ENCODE measurements at regions of chr11 and their contacts with region 1.

Region 1: DNA sequence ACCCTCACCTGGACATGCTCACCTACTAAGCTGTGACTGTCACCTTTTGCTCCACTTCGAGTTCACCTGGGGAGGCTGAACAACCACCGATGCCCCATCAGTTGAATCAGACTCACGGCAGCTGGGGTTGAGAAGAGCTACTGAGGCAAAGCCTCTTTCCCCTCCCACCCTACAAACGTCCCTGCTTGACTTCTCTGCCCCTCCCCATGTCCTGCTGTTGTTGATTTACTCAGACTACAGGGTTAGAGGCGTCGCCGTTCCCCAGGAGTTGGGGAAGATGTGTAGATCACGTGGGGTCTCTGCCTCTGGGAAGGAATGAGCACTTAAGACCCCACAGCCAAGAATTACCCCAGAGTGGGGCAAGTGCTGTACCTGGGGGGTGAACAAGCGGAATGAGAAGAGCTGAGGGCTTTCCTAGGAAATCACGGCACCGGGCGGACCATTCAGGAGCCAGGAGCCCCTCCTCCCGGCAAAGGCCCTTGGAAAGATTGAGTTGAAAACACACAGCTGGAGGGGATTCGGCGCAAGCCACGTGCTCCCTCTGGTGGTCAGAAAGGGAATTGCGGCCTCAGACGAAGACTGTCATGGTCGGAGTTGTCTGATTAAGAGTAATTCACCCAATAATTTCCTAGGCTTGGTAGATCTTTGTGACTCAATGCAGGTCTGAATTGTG is 7.0 kb downstream of the FXYD2 start:
- DNase-seq: peak; percentile 73 to 90 (median 85)
- ATAC-seq: peak; percentile 24
- H3K4me3 ChIP-seq: no peak overlapping the region
- H3K4me3 Mint-ChIP-seq: no peak overlapping the region
- H3K27ac ChIP-seq: peak overlapping the region in 1 of 2 experiments; percentile 83
- H3K27ac Mint-ChIP-seq: peak overlapping the region; percentile 80
- H3K4me1 ChIP-seq: peaks cover 60% of the 10 kb centered on the region
- H3K4me1 Mint-ChIP-seq: peaks cover 59% of the 10 kb centered on the region
- H3K27me3 ChIP-seq: no peaks in the 10 kb centered on the region
- H3K27me3 Mint-ChIP-seq: no peaks in the 10 kb centered on the region
- CTCF ChIP-seq: peak; percentile 96

Region 2: GRCh38 chr11:117426269-117426685 is 391.2 kb before region 1 on chr11:
- CTCF ChIA-PET with region 1: interaction called, 27 read pairs
- POLR2A ChIA-PET with region 1: no interaction called
- intact Hi-C with region 1: loop called (anchors 1 to 5 kb)
- DNase-seq: peak; percentile 32 to 83 (median 65)
- ATAC-seq: peak; percentile 54
- H3K4me3 ChIP-seq: no peak overlapping the region
- H3K4me3 Mint-ChIP-seq: no peak overlapping the region
- H3K27ac ChIP-seq: no peak overlapping the region
- H3K27ac Mint-ChIP-seq: no peak overlapping the region
- H3K4me1 ChIP-seq: peaks cover 3% of the 10 kb centered on the region
- H3K4me1 Mint-ChIP-seq: no peaks in the 10 kb centered on the region
- H3K27me3 ChIP-seq: peaks cover 0 to 3% of the 10 kb centered on the region in 2 experiments
- H3K27me3 Mint-ChIP-seq: peaks cover 4% of the 10 kb centered on the region
- CTCF ChIP-seq: peak; percentile 97

Region 3: GRCh38 chr11:117796872-117797529 is 20.5 kb before region 1 on chr11 and contains the start of gene DSCAML1:
- CTCF ChIA-PET with region 1: interaction called, 431 read pairs
- POLR2A ChIA-PET with region 1: interaction called, 4 read pairs
- intact Hi-C with region 1: no loop called
- DNase-seq: peak in 5 of 9 experiments; percentile 11 to 59 (median 47)
- ATAC-seq: peak; percentile 86
- H3K4me3 ChIP-seq: peak within 1 kb of the TSS; percentile 28 to 39
- H3K4me3 Mint-ChIP-seq: peak within 1 kb of the TSS; percentile 73
- H3K27ac ChIP-seq: no peak within 1 kb of the TSS
- H3K27ac Mint-ChIP-seq: no peak within 1 kb of the TSS
- H3K4me1 ChIP-seq: peaks cover 20% of the 10 kb centered on the region
- H3K4me1 Mint-ChIP-seq: peaks cover 18% of the 10 kb centered on the region
- H3K27me3 ChIP-seq: peaks cover 26 to 43% of the 10 kb centered on the region in 2 experiments
- H3K27me3 Mint-ChIP-seq: peaks cover 40% of the 10 kb centered on the region
- CTCF ChIP-seq: no peak
- total RNA-seq, gene DSCAML1: 1.3 to 1.8 TPM

Region 4: DNA sequence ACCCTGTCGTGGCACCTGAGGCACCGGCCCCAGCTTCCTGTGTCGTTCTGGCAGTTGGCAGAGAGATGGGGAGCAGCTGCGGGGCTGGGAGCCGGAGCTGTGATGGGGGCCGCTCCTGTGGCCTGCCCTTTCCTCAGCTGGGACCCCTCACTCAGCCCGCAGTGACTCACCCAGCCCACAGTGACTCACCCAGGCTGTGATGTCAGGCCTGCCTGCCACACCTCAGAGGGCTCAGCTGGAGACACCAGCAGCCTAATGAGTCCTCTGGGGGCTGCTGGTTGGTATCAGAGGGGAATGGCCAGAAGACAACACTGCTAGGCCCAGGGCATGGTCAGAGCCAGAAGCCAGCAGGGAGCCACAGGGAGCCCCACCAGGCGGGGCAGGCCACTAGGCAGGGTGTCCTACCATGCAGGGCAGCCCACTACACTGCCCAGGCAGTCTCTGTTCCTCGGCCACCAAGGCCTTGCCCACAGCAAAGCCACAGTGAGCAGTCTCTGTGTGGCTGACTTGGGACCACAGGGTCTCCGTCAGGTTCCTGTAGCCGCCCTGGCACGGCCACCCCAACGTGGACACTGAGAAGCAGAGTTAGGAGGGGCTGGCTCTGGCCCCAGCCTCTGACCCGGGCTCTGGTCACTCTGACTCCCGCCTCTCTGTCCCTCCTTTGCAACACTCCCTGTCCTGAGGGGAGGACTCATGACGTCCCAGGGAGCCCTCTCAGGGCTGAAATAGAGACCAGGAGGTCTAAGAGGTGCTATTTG is 11.3 kb after region 1 on chr11:
- CTCF ChIA-PET with region 1: interaction called, 40 read pairs
- POLR2A ChIA-PET with region 1: interaction called, 5 read pairs
- intact Hi-C with region 1: loop called in 1 of 2 experiments (anchors 1 kb)
- DNase-seq: peak; percentile 58 to 94 (median 89)
- ATAC-seq: peak; percentile 87
- H3K4me3 ChIP-seq: no peak overlapping the region
- H3K4me3 Mint-ChIP-seq: peak overlapping the region; percentile 53
- H3K27ac ChIP-seq: peak overlapping the region in 1 of 2 experiments; percentile 69
- H3K27ac Mint-ChIP-seq: peak overlapping the region; percentile 91
- H3K4me1 ChIP-seq: peaks cover 52% of the 10 kb centered on the region
- H3K4me1 Mint-ChIP-seq: peaks cover 69% of the 10 kb centered on the region
- H3K27me3 ChIP-seq: no peaks in the 10 kb centered on the region
- H3K27me3 Mint-ChIP-seq: no peaks in the 10 kb centered on the region
- CTCF ChIP-seq: no peak

Region 5: DNA sequence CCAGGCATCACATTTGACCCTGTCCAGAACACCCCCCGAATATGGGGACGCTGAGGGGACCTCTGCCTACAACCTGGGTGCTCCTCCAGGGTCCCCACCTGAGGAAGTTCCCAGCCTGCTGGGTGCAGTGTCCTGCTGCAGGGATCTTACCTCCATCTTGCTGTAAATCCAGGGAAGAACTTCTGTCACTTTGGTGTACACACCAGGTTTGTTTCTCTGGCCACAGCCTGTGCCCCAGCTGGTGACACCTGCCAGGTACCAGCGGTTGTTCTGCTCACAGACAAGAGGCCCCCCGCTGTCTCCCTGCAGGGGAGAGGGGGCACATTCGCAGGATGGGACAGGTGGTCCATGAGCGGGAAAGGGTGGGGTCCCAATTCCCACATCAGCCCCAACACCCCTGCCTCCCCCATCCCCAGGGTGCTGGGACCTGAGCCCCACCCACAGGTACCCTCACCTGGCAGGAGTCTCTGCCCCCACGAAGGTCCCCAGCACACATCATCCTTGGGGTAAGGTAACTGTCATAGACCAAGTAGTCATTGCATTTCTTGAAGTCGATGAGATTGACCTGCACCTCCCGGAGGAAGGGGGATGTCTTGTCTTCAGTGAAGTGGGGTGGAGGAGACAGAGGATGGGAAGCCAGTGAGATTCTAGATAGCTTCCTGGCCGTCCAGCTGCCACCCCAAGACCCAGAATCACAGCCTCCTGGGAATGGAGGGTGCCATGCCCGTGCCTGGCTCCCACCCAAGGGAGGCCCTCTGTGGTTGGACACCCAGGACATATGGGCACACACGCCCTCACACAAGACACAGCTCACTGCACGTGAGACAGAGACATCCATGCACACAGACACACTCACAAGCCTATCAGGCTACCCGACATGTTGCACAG is 86.2 kb after region 1 on chr11:
- CTCF ChIA-PET with region 1: interaction called, 5 read pairs
- POLR2A ChIA-PET with region 1: no interaction called
- intact Hi-C with region 1: loop called in 1 of 2 experiments (anchors 2 kb)
- DNase-seq: no peak
- ATAC-seq: no peak
- H3K4me3 ChIP-seq: no peak overlapping the region
- H3K4me3 Mint-ChIP-seq: no peak overlapping the region
- H3K27ac ChIP-seq: no peak overlapping the region
- H3K27ac Mint-ChIP-seq: no peak overlapping the region
- H3K4me1 ChIP-seq: no peaks in the 10 kb centered on the region
- H3K4me1 Mint-ChIP-seq: peaks cover 13% of the 10 kb centered on the region
- H3K27me3 ChIP-seq: no peaks in the 10 kb centered on the region
- H3K27me3 Mint-ChIP-seq: no peaks in the 10 kb centered on the region
- CTCF ChIP-seq: no peak

Region 6: GRCh38 chr11:117932067-117932370 is 114.5 kb after region 1 on chr11:
- CTCF ChIA-PET with region 1: interaction called, 14 read pairs
- POLR2A ChIA-PET with region 1: interaction called, 5 read pairs
- intact Hi-C with region 1: no loop called
- DNase-seq: peak in 6 of 9 experiments; percentile 32 to 73 (median 56)
- ATAC-seq: no peak
- H3K4me3 ChIP-seq: no peak overlapping the region
- H3K4me3 Mint-ChIP-seq: no peak overlapping the region
- H3K27ac ChIP-seq: peak overlapping the region in 1 of 2 experiments; percentile 65
- H3K27ac Mint-ChIP-seq: peak overlapping the region; percentile 91
- H3K4me1 ChIP-seq: peaks cover 52% of the 10 kb centered on the region
- H3K4me1 Mint-ChIP-seq: peaks cover 56% of the 10 kb centered on the region
- H3K27me3 ChIP-seq: no peaks in the 10 kb centered on the region
- H3K27me3 Mint-ChIP-seq: no peaks in the 10 kb centered on the region
- CTCF ChIP-seq: no peak

Region 7: DNA sequence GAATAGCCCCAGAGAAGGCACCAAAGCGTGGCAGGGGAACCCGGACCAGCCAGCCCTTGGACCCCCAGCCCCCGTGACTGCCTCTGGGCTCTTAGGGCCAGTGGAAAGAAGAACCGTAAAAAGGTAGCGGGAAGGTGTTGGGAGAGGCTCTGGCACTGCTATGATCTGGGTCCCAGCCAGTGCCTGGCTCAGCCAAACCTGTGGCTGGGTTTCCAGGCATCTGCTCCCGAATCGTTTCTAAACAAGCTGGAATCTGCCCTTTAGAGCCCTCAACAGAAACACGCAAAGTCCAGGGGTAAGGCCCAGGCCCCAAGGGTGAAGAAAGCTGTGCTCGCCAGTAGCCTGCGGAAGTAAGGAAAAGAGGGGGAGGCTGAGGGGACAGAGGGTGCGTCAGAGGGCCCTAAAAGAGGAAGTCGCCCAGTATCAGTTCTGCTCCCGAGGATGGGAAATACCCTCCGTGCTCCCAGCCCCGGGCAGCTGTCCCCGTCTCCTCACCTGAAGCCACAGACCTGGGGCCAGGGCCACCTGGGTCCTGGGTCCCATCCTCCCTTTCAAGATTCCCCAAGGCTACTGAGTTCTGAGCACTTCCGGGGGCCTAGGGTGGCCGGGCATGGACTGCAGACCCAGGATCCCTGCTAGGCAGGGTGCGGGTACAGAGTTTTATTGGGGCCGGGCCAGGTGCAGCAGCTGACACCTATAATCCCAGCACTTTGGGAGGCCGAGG is 193.4 kb after region 1 on chr11:
- CTCF ChIA-PET with region 1: no interaction called
- POLR2A ChIA-PET with region 1: no interaction called
- intact Hi-C with region 1: no loop called
- DNase-seq: peak in 2 of 9 experiments; percentile 32 to 63
- ATAC-seq: no peak
- H3K4me3 ChIP-seq: no peak overlapping the region
- H3K4me3 Mint-ChIP-seq: no peak overlapping the region
- H3K27ac ChIP-seq: peak overlapping the region in 1 of 2 experiments; percentile 84
- H3K27ac Mint-ChIP-seq: peak overlapping the region; percentile 15
- H3K4me1 ChIP-seq: peaks cover 100% of the 10 kb centered on the region
- H3K4me1 Mint-ChIP-seq: peaks cover 98% of the 10 kb centered on the region
- H3K27me3 ChIP-seq: no peaks in the 10 kb centered on the region
- H3K27me3 Mint-ChIP-seq: no peaks in the 10 kb centered on the region
- CTCF ChIP-seq: no peak

Measured in CD8-positive, alpha-beta T cell (primary cell).